ENCODE measurements at regions of chr5 and their contacts with region 1.

Region 1: GRCh38 chr5:157603333-157604190 is 28.0 kb upstream of the ADAM19 start:
- DNase-seq: peak; percentile 82
- H3K4me3 Mint-ChIP-seq: peak overlapping the region; percentile 3
- H3K27ac Mint-ChIP-seq: peak overlapping the region; percentile 94
- H3K4me1 Mint-ChIP-seq: peaks cover 87% of the 10 kb centered on the region
- H3K27me3 Mint-ChIP-seq: no peaks in the 10 kb centered on the region

Region 2: DNA sequence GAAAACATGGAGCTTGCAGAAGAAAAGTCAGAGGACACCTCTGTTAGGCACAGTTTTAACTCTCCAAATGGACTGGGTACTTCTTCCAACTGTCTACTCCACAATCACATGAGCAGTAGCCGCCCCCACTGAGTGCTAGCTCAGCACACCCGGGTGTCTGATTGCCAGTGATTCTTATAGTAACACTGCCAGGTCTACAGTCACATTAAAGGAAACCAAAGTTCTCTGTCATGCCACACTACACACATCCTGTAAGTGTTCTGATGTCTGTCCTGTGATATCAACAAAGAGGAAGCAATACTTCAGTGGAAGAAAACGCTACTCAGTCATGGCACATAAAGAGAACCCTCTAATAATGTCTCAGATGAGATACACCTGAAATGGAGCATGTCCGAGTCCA is 494.6 kb before region 1 on chr5 and contains the start of gene HAVCR2:
- CTCF ChIA-PET with region 1: no interaction called
- intact Hi-C with region 1: loop called (anchors 5 kb)
- DNase-seq: peak; percentile 87
- H3K4me3 Mint-ChIP-seq: peak within 1 kb of the TSS; percentile 65
- H3K27ac Mint-ChIP-seq: peak within 1 kb of the TSS; percentile 87
- H3K4me1 Mint-ChIP-seq: peaks cover 40% of the 10 kb centered on the region
- H3K27me3 Mint-ChIP-seq: no peaks in the 10 kb centered on the region
- total RNA-seq, gene HAVCR2: 10.2 to 10.4 TPM

Region 3: DNA sequence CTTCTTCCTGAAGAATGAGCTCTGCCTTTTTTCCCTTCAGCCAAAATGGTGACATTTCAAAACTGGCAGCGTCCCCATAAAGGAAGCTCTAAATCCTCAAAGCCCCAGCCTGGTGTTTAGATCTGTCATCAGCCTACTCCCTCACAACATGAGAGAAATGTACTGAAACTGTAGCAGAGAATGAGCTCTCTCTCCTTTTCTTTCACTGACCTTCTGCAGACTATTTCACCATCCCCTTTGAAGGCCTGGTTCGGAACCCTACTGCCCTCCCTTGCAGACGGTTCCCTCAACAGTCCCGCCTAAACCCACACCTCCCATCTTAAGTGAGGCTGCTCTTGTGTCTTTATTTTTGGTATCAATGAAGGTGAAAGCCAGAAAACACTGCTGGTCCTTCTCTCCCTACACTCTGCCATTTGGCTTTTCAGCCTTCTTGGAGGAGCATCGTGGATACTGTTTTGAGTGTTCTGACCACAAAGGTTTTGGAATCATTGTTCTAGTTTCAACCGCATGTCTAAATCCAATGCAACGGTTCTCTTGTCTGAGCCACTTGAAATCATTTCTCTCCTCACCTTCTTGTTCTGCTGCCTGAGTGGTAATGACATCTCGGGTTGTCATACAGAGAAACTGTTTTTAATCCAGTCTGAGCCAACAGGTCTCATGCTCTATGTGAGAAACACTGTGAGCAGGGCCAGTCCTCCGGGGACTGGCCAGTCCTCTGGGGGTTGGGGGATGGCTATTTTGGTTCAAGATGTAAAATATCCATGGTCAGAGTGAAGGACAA is 383.9 kb before region 1 on chr5:
- CTCF ChIA-PET with region 1: no interaction called
- intact Hi-C with region 1: loop called (anchors 2 kb)
- DNase-seq: peak; percentile 65
- H3K4me3 Mint-ChIP-seq: peak overlapping the region; percentile 45
- H3K27ac Mint-ChIP-seq: peak overlapping the region; percentile 97
- H3K4me1 Mint-ChIP-seq: peaks cover 81% of the 10 kb centered on the region
- H3K27me3 Mint-ChIP-seq: no peaks in the 10 kb centered on the region

Region 4: DNA sequence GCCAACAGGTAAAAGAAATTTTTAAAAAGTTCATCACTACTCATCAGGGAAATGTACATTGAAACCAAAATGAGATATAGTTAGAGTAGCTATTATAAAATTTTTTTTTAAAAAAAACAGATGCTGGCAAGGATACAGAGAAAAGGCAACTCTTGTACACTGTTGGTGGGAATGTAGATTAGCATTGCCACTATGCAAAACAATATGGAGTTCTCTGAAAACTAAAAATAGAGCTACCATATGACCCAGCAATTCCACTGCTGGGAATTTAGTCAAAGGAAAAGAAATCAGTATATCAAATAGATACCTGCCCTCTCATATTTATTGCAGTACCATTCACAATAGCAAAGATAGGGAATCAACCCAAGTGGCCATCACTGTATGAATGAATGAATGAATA is 187.7 kb before region 1 on chr5:
- CTCF ChIA-PET with region 1: no interaction called
- intact Hi-C with region 1: no loop called
- DNase-seq: no peak
- H3K4me3 Mint-ChIP-seq: no peak overlapping the region
- H3K27ac Mint-ChIP-seq: no peak overlapping the region
- H3K4me1 Mint-ChIP-seq: no peaks in the 10 kb centered on the region
- H3K27me3 Mint-ChIP-seq: peaks cover 6% of the 10 kb centered on the region

Region 5: DNA sequence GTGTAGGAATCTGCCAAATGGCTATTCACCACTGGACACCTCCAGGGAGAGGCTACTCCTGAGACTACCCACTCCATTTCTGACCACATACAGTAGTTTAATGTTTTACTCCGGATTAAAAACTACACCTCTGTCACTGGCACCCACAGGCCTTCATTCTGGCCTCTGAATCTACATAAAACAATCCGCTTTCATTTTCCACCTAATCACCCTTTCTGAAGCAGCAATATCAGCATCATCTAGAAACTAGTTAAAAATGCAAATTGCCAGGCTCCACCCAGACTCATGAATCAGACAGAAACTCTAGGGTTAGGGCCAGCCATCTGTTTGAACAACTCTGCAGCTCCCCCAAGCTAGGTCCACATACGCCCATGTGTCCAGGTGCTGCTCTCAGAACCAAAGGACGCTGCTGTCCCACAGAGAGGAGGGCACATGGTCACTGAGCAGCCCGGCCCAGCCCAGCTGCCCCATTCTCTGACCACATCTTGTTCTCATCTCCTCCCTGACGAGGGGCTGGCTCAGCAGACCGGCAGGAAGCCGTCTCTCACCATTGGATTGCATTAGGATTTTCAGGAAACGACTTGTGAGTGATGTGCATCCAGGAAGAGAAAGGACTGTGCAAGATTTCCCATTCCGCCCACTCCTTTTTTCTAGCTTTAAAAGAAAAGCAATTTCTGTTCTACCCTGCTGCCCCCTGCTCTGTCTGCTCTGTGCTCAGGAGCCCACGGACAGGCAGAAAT is 62.7 kb before region 1 on chr5:
- CTCF ChIA-PET with region 1: interaction called, 3 read pairs
- intact Hi-C with region 1: loop called (anchors 1 kb)
- DNase-seq: peak; percentile 63
- H3K4me3 Mint-ChIP-seq: peak overlapping the region; percentile 8
- H3K27ac Mint-ChIP-seq: peak overlapping the region; percentile 66
- H3K4me1 Mint-ChIP-seq: peaks cover 50% of the 10 kb centered on the region
- H3K27me3 Mint-ChIP-seq: no peaks in the 10 kb centered on the region

Region 6: GRCh38 chr5:157651623-157652549 is 48.3 kb after region 1 on chr5 and contains the start of gene SOX30:
- CTCF ChIA-PET with region 1: no interaction called
- intact Hi-C with region 1: no loop called
- DNase-seq: peak; percentile 87
- H3K4me3 Mint-ChIP-seq: peak within 1 kb of the TSS; percentile 71
- H3K27ac Mint-ChIP-seq: peak within 1 kb of the TSS; percentile 78
- H3K4me1 Mint-ChIP-seq: peaks cover 12% of the 10 kb centered on the region
- H3K27me3 Mint-ChIP-seq: peaks cover 2% of the 10 kb centered on the region
- total RNA-seq, gene SOX30: 0.36 to 0.57 TPM

Region 7: GRCh38 chr5:157731272-157732129 is 127.9 kb after region 1 on chr5 and contains the start of gene THG1L:
- CTCF ChIA-PET with region 1: no interaction called
- intact Hi-C with region 1: loop called (anchors 1 kb)
- DNase-seq: peak; percentile 100
- H3K4me3 Mint-ChIP-seq: peak within 1 kb of the TSS; percentile 97
- H3K27ac Mint-ChIP-seq: peak within 1 kb of the TSS; percentile 95
- H3K4me1 Mint-ChIP-seq: peaks cover 25% of the 10 kb centered on the region
- H3K27me3 Mint-ChIP-seq: no peaks in the 10 kb centered on the region
- total RNA-seq, gene THG1L: 28.1 to 30.2 TPM

Region 8: DNA sequence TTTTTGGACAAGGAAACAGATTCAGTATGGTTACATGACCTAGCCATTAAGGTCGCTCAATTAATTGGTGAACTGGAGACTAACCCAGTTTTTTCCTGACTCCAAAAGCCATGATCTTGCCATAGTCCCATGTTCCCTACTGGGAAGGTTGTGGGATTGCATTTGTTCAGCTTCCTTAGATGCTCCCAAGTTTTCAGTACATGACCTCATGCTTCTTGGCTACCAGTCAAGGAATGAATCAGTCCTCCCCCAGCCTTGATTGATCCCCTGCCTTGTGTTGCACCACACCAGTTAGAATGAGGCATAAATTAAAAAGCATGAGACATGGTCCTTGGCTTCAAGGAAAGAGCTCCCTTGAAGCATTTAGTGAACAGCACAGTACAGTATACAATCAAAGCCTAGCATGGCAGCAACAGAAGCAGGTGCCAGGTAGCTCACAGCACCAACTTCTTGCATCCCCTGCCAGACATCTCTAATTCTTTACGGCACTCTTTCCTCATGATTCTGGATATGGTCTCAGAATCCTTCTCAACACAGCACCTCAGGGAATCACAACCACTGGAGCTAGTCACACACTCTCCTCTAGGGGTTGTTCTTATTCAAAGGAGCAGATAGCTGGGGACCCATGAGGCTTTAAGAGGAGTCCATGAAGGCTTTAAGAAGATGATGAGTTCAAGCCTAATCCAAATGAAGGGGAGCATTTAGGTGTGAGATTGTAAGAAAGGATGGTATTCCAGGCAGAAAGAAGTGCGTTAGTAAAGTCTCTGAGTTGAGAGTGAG is 550.9 kb after region 1 on chr5:
- CTCF ChIA-PET with region 1: no interaction called
- intact Hi-C with region 1: no loop called
- DNase-seq: no peak
- H3K4me3 Mint-ChIP-seq: no peak overlapping the region
- H3K27ac Mint-ChIP-seq: no peak overlapping the region
- H3K4me1 Mint-ChIP-seq: no peaks in the 10 kb centered on the region
- H3K27me3 Mint-ChIP-seq: peaks cover 3% of the 10 kb centered on the region

Region 9: DNA sequence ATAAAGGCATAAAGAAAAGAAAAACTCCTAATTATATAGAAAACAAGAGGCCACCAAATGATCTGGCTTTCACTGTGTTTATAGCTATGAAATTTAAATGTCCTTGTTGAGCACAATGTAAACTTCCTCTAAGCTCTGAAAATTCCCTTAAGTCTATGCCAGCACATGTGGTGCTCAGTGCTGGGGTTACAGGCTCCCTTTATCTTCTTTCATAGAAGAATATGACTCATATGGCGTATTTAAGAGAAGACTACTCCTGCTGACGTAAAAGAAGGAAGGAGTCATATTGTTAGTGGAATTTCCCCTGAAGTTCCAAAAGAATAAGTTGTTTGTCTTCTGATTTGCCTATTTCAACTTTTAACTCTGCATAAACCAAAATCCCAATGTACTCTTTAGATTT is 1575.4 kb after region 1 on chr5:
- CTCF ChIA-PET with region 1: no interaction called
- intact Hi-C with region 1: loop called (anchors 5 kb)
- DNase-seq: peak; percentile 63
- H3K4me3 Mint-ChIP-seq: no peak overlapping the region
- H3K27ac Mint-ChIP-seq: peak overlapping the region; percentile 96
- H3K4me1 Mint-ChIP-seq: peaks cover 78% of the 10 kb centered on the region
- H3K27me3 Mint-ChIP-seq: no peaks in the 10 kb centered on the region

Measured in activated naive CD4-positive, alpha-beta T cell treated with anti-CD3 and anti-CD28 coated beads for 36 hours (primary cell).